Caco-2 (cell line): ENCODE measurements at regions of chr11 and their contacts with region 1.

Region 1: DNA sequence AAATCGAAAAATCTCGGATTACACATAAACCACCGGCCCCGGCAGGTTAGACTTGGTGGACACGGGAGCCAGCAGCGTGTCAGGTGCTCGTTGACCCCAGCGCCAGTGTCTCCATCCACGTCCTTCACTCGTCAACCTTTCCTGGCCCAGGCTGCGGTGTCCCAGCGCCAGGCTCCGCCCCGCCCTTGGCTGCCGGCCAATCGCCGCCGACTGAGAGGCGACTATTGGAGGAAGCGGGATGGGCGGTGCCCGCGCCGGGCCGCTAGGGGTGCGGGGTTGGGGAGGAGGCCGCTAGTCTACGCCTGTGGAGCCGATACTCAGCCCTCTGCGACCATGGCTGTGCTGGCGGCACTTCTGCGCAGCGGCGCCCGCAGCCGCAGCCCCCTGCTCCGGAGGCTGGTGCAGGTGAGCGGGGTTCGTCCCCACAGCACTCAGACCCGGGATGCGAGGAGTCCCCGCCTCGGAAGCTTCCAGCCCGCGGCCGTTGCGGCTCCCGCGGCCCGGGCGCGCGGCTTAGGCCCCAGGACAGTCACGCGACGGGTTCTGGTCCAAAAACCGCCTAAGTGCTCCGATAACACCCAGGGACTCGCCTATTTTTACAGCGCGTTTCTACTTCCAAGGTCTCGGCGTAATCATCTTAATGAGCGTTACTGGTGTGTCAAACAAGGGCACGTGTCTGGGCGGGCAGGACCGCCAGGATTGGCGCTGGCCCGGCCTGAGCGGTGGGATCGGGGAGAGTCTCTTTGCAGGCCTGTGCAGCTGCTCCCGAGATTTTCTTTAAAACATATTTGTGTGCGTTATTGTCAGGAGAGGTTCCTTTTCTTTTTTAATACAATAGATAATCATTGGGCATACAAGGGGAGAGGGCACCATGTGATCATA is at the start of gene ACAT1:
- DNase-seq: peak; percentile 98 to 100
- H3K4me3 ChIP-seq: peak within 1 kb of the TSS; percentile 88
- H3K4me3 Mint-ChIP-seq: peak within 1 kb of the TSS; percentile 81
- H3K27ac Mint-ChIP-seq: peak within 1 kb of the TSS; percentile 66
- H3K4me1 ChIP-seq: peaks cover 13% of the 10 kb centered on the region
- H3K4me1 Mint-ChIP-seq: peaks cover 27% of the 10 kb centered on the region
- H3K27me3 ChIP-seq: no peaks in the 10 kb centered on the region
- H3K27me3 Mint-ChIP-seq: no peaks in the 10 kb centered on the region
- CTCF ChIP-seq: peak; percentile 54 to 67
- total RNA-seq, gene ACAT1: 131 and 134 TPM in 2 replicates

Region 2: GRCh38 chr11:107999759-108000455 is 121.6 kb before region 1 on chr11:
- CTCF ChIA-PET with region 1: interaction called, 11 read pairs
- POLR2A ChIA-PET with region 1: no interaction called
- intact Hi-C with region 1: no loop called
- DNase-seq: peak; percentile 81 to 85
- H3K4me3 ChIP-seq: no peak overlapping the region
- H3K4me3 Mint-ChIP-seq: no peak overlapping the region
- H3K27ac Mint-ChIP-seq: no peak overlapping the region
- H3K4me1 ChIP-seq: 0 out of 2 replicates have a peak, but pooled peaks cover 3% of the 10 kb centered on the region
- H3K4me1 Mint-ChIP-seq: peaks cover 6% of the 10 kb centered on the region
- H3K27me3 ChIP-seq: peaks cover 1% of the 10 kb centered on the region; the same call in 1 of the 2 replicates
- H3K27me3 Mint-ChIP-seq: peaks cover 10% of the 10 kb centered on the region
- CTCF ChIP-seq: peak; percentile 84 to 93

Region 3: GRCh38 chr11:108093128-108093904 is 28.2 kb before region 1 on chr11:
- CTCF ChIA-PET with region 1: no interaction called
- POLR2A ChIA-PET with region 1: interaction called, 11 read pairs
- intact Hi-C with region 1: no loop called
- DNase-seq: no peak
- H3K4me3 ChIP-seq: no peak overlapping the region
- H3K4me3 Mint-ChIP-seq: no peak overlapping the region
- H3K27ac Mint-ChIP-seq: no peak overlapping the region
- H3K4me1 ChIP-seq: peaks cover 4% of the 10 kb centered on the region
- H3K4me1 Mint-ChIP-seq: peaks cover 7% of the 10 kb centered on the region
- H3K27me3 ChIP-seq: no peaks in the 10 kb centered on the region
- H3K27me3 Mint-ChIP-seq: no peaks in the 10 kb centered on the region
- CTCF ChIP-seq: no peak

Region 4: GRCh38 chr11:108414958-108415357 is 293.4 kb after region 1 on chr11:
- CTCF ChIA-PET with region 1: no interaction called
- POLR2A ChIA-PET with region 1: no interaction called
- intact Hi-C with region 1: loop called (anchors 5 kb)
- DNase-seq: no peak
- H3K4me3 ChIP-seq: no peak overlapping the region
- H3K4me3 Mint-ChIP-seq: no peak overlapping the region
- H3K27ac Mint-ChIP-seq: no peak overlapping the region
- H3K4me1 ChIP-seq: no peaks in the 10 kb centered on the region
- H3K4me1 Mint-ChIP-seq: no peaks in the 10 kb centered on the region
- H3K27me3 ChIP-seq: no peaks in the 10 kb centered on the region
- H3K27me3 Mint-ChIP-seq: peaks cover 3% of the 10 kb centered on the region
- CTCF ChIP-seq: no peak

Region 5: DNA sequence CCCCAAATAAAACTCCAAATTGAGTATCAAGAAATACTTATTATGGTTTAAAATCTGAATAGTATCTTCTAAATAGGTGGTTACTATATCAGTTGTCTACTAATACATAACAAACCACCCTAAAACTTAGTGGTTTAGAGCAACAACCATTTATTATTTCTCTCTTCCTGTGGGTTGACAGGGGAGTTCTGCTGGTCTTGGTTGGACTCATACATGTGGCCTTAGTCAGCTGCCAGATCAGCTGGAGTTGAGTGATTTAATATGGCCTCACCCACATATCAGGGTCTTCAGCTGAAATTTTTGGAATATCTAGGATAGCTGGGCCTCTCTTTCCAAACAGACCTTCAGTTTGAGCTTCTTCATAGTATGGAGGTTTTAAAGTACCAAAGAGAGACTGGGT is 311.3 kb after region 1 on chr11:
- CTCF ChIA-PET with region 1: no interaction called
- POLR2A ChIA-PET with region 1: no interaction called
- intact Hi-C with region 1: no loop called
- DNase-seq: peak in 1 of 2 experiments; percentile 18
- H3K4me3 ChIP-seq: no peak overlapping the region
- H3K4me3 Mint-ChIP-seq: no peak overlapping the region
- H3K27ac Mint-ChIP-seq: no peak overlapping the region
- H3K4me1 ChIP-seq: no peaks in the 10 kb centered on the region
- H3K4me1 Mint-ChIP-seq: peaks cover 6% of the 10 kb centered on the region
- H3K27me3 ChIP-seq: no peaks in the 10 kb centered on the region
- H3K27me3 Mint-ChIP-seq: no peaks in the 10 kb centered on the region
- CTCF ChIP-seq: no peak